ENCODE measurements at regions of chr2 and their contacts with region 1.

Region 1: DNA sequence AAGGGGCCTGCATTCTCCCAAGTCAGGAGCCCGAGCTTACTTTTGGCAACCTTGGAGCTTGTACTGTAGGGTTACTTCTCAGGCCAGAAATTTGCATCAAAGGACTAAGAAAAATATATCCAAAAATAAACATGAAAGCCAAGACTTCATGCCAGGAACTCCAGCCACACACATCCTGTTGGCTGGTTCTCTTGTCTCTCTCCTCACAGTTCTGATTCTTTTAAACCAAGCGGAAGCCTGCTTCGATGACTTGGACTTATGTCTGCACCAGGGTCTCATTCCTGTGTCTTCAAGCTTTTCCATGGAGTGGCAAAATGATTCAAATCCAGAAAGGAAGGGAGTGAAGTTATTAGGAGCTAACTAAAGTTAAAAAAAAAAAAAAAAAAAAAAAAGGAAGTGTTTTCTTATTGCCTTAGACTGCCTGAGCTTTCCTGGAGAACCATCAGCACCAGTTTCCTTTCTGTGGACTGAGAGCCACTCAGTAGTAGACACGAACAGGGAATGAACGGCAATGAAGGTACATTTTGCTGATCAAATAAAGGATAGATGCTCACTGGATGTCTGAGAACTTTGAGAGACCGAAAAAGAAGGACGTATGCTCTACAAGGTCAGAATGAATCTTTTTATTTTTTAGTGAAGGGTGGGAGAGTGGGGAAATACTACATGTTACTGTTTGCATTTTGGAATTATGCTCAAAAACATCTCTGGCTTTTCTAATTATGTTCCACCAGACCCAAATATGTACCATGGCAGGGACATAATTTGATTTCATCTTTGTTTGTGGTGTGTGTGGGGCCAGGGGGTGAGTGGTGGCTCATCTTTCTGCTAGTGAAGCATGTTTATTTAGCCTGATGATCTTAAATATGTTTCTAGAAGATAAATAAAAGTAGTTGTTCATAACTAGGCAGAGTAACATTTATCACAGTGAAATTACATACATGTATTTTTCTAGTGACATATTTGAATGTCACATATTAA is 86.0 kb downstream of the RAPGEF4 start:
- DNase-seq: no peak

Region 2: GRCh38 chr2:172540421-172540820 is 281.2 kb before region 1 on chr2:
- intact Hi-C with region 1: no loop called
- DNase-seq: no peak

Region 3: GRCh38 chr2:172931918-172932520 is 110.4 kb after region 1 on chr2:
- intact Hi-C with region 1: loop called (anchors 1 kb)
- DNase-seq: no peak